GM12878 (cell line): ENCODE measurements at regions of chr7 and their contacts with region 1.

Region 1: GRCh38 chr7:69677054-69677852 is 79.0 kb downstream of the AUTS2 start:
- DNase-seq: no peak
- ATAC-seq: peak; percentile 52
- H3K4me3 ChIP-seq: no peak overlapping the region
- H3K27ac ChIP-seq: peak overlapping the region; percentile 77
- H3K4me1 ChIP-seq: peaks cover 38% of the 10 kb centered on the region
- H3K27me3 ChIP-seq: no peaks in the 10 kb centered on the region
- CTCF ChIP-seq: peak; percentile 41 to 51 (median 45)
- EP300 ChIP-seq: no peak
- POLR2A ChIP-seq: no peak
- RAD21 ChIP-seq: peak; percentile 56

Region 2: GRCh38 chr7:69663911-69664832 is 13.1 kb before region 1 on chr7:
- CTCF ChIA-PET with region 1: interaction called, 10 read pairs
- POLR2A ChIA-PET with region 1: interaction called, 7 read pairs
- RAD21 ChIA-PET with region 1: interaction called, 24 read pairs
- SMC1A ChIA-PET with region 1: interaction called, 89 read pairs
- in situ Hi-C with region 1: no loop called
- intact Hi-C with region 1: loop called (anchors 1 kb)
- DNase-seq: no peak
- ATAC-seq: peak; percentile 81
- H3K4me3 ChIP-seq: no peak overlapping the region
- H3K27ac ChIP-seq: peak overlapping the region; percentile 6; the same call in 1 of the 2 replicates
- H3K4me1 ChIP-seq: peaks cover 33% of the 10 kb centered on the region
- H3K27me3 ChIP-seq: no peaks in the 10 kb centered on the region
- CTCF ChIP-seq: no peak
- EP300 ChIP-seq: peak in 1 of 2 experiments; percentile 13; a peak in 1 of 4 replicates
- POLR2A ChIP-seq: no peak
- RAD21 ChIP-seq: no peak

Region 3: GRCh38 chr7:69696054-69696591 is 18.9 kb after region 1 on chr7:
- CTCF ChIA-PET with region 1: interaction called, 8 read pairs
- POLR2A ChIA-PET with region 1: interaction called, 6 read pairs
- RAD21 ChIA-PET with region 1: interaction called, 6 read pairs
- SMC1A ChIA-PET with region 1: interaction called, 88 read pairs
- in situ Hi-C with region 1: no loop called
- intact Hi-C with region 1: no loop called
- DNase-seq: peak; percentile 88
- ATAC-seq: peak; percentile 82
- H3K4me3 ChIP-seq: no peak overlapping the region; the same call in 1 of the 2 replicates
- H3K27ac ChIP-seq: peak overlapping the region; percentile 41
- H3K4me1 ChIP-seq: peaks cover 59% of the 10 kb centered on the region
- H3K27me3 ChIP-seq: no peaks in the 10 kb centered on the region
- CTCF ChIP-seq: no peak
- EP300 ChIP-seq: peak; percentile 91 to 97
- POLR2A ChIP-seq: no peak
- RAD21 ChIP-seq: peak; percentile 7; the same call in 1 of the 2 replicates

Region 4: DNA sequence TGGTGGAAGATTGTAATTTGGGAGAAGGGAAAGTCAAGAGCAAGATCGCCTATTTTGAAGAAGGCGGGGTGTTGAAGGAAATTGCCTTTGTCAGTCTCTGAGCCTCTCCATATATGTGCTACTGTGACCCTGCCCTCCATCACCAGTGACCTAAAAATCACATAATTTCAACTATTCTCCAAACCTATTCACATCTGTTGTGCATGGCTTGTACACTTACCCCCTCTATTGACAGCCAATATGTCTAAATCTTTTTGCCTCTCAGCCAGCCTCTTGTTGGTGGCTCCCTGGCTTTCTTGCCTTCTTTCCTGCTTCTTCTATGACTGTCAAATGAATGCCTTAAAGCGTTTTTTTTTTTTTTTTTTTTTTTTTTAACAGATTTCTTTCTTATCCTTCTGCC is 216.7 kb after region 1 on chr7:
- CTCF ChIA-PET with region 1: no interaction called
- POLR2A ChIA-PET with region 1: interaction called, 5 read pairs
- RAD21 ChIA-PET with region 1: no interaction called
- SMC1A ChIA-PET with region 1: no interaction called
- in situ Hi-C with region 1: no loop called
- intact Hi-C with region 1: loop called (anchors 5 kb)
- DNase-seq: no peak
- ATAC-seq: peak; percentile 46
- H3K4me3 ChIP-seq: no peak overlapping the region
- H3K27ac ChIP-seq: no peak overlapping the region
- H3K4me1 ChIP-seq: peaks cover 34% of the 10 kb centered on the region
- H3K27me3 ChIP-seq: no peaks in the 10 kb centered on the region
- CTCF ChIP-seq: peak; percentile 53 to 74 (median 57); a peak in 5 of 6 replicates
- EP300 ChIP-seq: no peak
- POLR2A ChIP-seq: no peak
- RAD21 ChIP-seq: peak; percentile 88